Activated CD4-positive, alpha-beta T cell treated with anti-CD3 and anti-CD28 coated beads, Interleukin-2, amount 10 ng/mL, durations not matched to agents 7 days and 5 days (primary cell): ENCODE measurements at regions of chr15 and their contacts with region 1.

Region 1: DNA sequence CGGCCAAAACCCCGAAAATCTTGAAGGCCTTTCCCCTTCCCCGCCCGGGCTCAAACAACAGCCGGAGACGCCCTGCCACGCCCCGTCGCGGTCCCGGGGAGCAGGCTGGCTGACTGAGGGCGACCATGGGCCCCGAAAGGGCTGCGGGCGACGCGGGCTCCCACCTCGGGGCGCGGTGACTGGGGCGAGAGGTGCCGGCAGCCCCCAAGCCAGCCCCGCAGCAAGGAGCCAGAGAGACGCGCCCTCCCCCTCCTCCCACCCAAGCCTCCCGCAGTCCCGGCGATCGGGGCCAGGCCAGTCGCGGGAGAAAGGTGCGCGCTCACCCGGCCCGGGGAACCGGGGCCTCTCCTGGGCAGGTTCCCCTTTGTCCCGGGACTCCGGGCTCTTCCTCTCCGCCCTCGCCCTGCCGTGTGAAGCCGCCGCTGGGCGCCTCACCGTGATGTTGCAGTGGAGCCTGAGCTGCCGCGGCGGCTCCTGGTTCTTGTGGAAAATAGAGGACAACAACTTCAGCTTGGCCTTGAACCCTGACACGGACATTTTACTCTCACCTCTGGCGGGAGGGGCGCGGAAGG is 30.6 kb upstream of the ZSCAN2 start:
- DNase-seq: peak; percentile 64
- H3K4me3 Mint-ChIP-seq: peak overlapping the region; percentile 81
- H3K27ac Mint-ChIP-seq: peak overlapping the region; percentile 89
- H3K4me1 Mint-ChIP-seq: peaks cover 18% of the 10 kb centered on the region
- H3K27me3 Mint-ChIP-seq: no peaks in the 10 kb centered on the region

Region 2: DNA sequence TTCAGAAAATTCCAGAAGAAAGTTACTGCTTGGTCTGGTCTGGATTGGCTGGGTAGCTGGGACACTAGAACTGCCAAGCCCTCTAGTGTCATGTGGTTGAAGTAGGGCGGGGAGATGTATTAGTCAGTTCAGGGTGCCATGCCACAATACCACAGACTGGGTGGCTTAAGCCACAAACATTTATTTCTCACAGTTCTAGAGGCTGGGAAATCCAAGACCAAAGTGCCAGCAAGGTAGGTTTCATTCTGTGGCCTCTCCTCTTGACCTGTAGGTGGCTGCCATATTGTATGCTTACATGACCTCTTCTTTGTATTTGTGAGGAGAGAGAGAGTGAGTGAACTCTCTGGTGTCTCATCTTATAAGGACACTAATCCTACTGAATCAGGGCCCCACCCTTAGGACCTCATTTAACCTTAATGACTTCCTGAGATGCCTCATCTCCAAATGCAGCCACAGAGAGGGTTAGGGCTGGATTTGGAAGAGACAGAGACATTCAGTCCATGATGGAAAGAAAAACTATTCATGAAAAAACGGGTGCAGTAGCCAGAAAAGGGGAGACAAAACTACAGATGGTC is 12.4 kb after region 1 on chr15:
- CTCF ChIA-PET with region 1: interaction called, 25 read pairs
- POLR2A ChIA-PET with region 1: no interaction called
- DNase-seq: no peak
- H3K4me3 Mint-ChIP-seq: no peak overlapping the region
- H3K27ac Mint-ChIP-seq: peak overlapping the region; percentile 9
- H3K4me1 Mint-ChIP-seq: peaks cover 9% of the 10 kb centered on the region
- H3K27me3 Mint-ChIP-seq: peaks cover 13% of the 10 kb centered on the region

Region 3: DNA sequence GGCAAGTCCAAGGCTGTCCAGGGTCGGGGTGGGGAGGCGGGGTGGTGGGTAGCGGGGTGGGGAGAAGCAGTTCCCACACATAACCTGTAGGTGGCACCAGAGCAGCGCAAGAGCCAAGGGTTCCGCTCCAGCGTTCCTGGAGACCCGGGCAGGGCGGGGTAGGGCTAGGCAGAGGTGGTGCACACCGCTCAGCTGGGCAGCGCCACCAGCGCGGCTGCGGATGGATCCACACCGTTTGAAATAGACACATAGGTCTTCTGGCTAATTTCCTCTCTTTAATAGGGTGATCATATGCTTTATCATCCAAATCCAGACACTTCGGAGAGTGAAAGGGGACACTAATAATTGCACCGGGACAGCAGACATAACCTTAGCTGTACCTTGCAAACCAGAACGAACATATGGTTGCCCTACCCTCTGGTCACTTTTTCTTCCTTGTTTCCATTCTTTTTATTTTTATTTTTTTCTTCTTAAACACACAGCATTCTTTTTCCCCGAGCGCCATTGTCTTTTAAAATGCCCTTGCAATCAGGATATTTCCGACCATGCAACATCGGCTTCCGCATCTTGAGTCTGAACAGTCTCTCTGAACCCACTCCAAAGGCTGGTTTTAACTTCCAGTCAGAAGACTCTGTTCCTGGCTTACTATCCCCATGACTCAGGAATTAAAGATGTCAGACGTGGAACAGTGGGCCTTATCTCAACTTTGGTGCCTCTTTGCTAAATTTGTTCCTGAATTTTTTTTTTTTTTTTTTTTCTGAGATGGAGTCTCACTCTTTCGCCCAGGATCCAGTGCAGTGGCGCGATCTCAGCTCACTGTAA is 18.0 kb after region 1 on chr15:
- CTCF ChIA-PET with region 1: interaction called, 25 read pairs
- POLR2A ChIA-PET with region 1: interaction called, 4 read pairs
- DNase-seq: peak; percentile 87
- H3K4me3 Mint-ChIP-seq: peak overlapping the region; percentile 31
- H3K27ac Mint-ChIP-seq: no peak overlapping the region
- H3K4me1 Mint-ChIP-seq: peaks cover 5% of the 10 kb centered on the region
- H3K27me3 Mint-ChIP-seq: peaks cover 17% of the 10 kb centered on the region

Region 4: DNA sequence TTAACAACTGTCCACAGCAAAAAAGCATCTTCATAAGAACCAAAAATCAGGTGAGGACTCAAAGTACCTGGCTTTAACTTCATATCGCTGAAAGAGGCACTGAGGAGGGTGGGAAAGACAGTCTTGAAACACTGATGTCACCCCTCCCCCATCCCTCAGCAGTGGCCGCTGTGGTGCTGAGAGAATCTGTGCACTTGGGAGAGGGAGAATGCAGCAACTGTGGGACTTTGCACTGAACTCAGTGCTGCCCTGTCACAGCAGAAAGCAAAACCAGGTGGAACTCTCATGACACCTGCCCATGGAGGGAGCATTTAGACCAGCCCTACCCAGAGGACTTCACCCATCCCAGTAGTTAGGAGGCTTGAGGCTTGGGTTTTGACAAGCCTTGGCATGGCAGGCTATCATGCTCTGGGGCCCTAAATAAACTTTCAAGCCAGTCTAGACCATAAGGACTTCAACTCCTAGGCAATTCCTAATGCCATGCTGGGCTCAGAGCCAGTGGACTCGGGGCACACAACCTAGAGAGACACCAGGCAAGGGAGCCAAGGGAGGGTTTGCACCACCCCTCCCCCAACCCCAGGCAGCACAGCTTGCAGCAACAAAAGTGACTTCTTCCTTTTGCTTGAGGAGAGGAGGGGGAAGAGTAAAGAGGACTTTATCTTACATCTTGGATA is 24.5 kb after region 1 on chr15:
- CTCF ChIA-PET with region 1: interaction called, 20 read pairs
- POLR2A ChIA-PET with region 1: interaction called, 4 read pairs
- DNase-seq: no peak
- H3K4me3 Mint-ChIP-seq: no peak overlapping the region
- H3K27ac Mint-ChIP-seq: no peak overlapping the region
- H3K4me1 Mint-ChIP-seq: peaks cover 38% of the 10 kb centered on the region
- H3K27me3 Mint-ChIP-seq: peaks cover 6% of the 10 kb centered on the region

Region 5: GRCh38 chr15:84600341-84600850 is 30.1 kb after region 1 on chr15:
- CTCF ChIA-PET with region 1: interaction called, 20 read pairs
- POLR2A ChIA-PET with region 1: no interaction called
- DNase-seq: peak; percentile 66
- H3K4me3 Mint-ChIP-seq: peak overlapping the region; percentile 82
- H3K27ac Mint-ChIP-seq: peak overlapping the region; percentile 47
- H3K4me1 Mint-ChIP-seq: peaks cover 61% of the 10 kb centered on the region
- H3K27me3 Mint-ChIP-seq: no peaks in the 10 kb centered on the region

Region 6: DNA sequence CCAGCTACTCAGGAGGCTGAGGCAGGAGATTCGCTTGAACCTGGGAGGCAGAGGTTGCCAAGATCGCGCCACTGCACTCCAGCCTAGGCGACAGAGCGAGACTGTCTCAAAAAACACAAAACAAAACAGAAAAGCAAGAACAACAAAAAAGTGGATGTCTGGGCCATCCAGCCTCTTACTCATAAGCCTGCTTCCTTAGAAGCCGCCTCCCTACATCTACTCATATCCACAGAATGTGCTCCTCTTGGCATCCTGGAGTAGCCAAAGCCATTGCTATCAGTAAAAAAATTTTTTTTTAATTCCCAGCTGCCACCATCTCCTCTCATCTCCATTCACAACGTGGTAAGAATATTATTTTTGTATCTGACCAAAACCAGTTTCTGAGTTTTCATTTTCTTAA is 41.4 kb after region 1 on chr15:
- CTCF ChIA-PET with region 1: no interaction called
- POLR2A ChIA-PET with region 1: no interaction called
- DNase-seq: no peak
- H3K4me3 Mint-ChIP-seq: no peak overlapping the region
- H3K27ac Mint-ChIP-seq: no peak overlapping the region
- H3K4me1 Mint-ChIP-seq: peaks cover 2% of the 10 kb centered on the region
- H3K27me3 Mint-ChIP-seq: no peaks in the 10 kb centered on the region